ENCODE measurements at regions of chrX and their contacts with region 1.

Region 1: GRCh38 chrX:55057675-55058249 is 17.1 kb upstream of the PAGE2B start:
- DNase-seq: no peak
- H3K4me3 ChIP-seq: no peak overlapping the region
- H3K27ac ChIP-seq: no peak overlapping the region
- H3K27me3 ChIP-seq: no peaks in the 10 kb centered on the region
- CTCF ChIP-seq: peak; percentile 73

Region 2: GRCh38 chrX:54639346-54640102 is 418.2 kb before region 1 on chrX:
- CTCF ChIA-PET with region 1: no interaction called
- POLR2A ChIA-PET with region 1: no interaction called
- DNase-seq: peak; percentile 92
- H3K4me3 ChIP-seq: peak overlapping the region; percentile 67
- H3K27ac ChIP-seq: peak overlapping the region; percentile 97
- H3K27me3 ChIP-seq: no peaks in the 10 kb centered on the region
- CTCF ChIP-seq: peak; percentile 58

Region 3: GRCh38 chrX:54891573-54891972 is 166.2 kb before region 1 on chrX:
- CTCF ChIA-PET with region 1: interaction called, 27 read pairs
- POLR2A ChIA-PET with region 1: no interaction called
- DNase-seq: no peak
- H3K4me3 ChIP-seq: no peak overlapping the region
- H3K27ac ChIP-seq: no peak overlapping the region
- H3K27me3 ChIP-seq: no peaks in the 10 kb centered on the region
- CTCF ChIP-seq: peak; percentile 51

Measured in AG04450 (cell line).